GM12878 (cell line): ENCODE measurements at regions of chr5 and their contacts with region 1.

Region 1: GRCh38 chr5:110507972-110508371 is 218.5 kb downstream of the TMEM232 start:
- DNase-seq: no peak
- ATAC-seq: no peak
- H3K4me3 ChIP-seq: no peak overlapping the region
- H3K27ac ChIP-seq: no peak overlapping the region
- H3K4me1 ChIP-seq: no peaks in the 10 kb centered on the region
- H3K27me3 ChIP-seq: no peaks in the 10 kb centered on the region; a peak in 1 of 4 replicates
- CTCF ChIP-seq: no peak
- EP300 ChIP-seq: no peak
- POLR2A ChIP-seq: no peak
- RAD21 ChIP-seq: no peak

Region 2: DNA sequence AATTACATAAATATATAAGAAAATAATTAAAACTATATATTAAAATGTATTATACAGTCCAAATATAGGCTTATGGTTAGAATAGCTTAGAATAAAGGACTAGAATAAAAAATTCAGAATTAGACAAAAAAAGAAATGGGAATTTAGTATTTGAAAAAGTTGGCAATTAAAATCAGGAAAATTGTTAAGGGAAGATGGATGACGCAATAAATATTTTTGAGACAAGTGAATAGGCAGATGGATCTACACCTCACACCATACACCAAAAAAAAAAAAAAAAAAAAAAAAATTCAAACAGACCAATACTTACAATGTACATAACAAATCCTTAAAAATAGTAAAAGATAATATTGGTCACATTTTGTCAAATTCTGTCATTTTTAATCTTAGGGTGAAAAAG is 17.8 kb after region 1 on chr5:
- CTCF ChIA-PET with region 1: no interaction called
- POLR2A ChIA-PET with region 1: no interaction called
- RAD21 ChIA-PET with region 1: no interaction called
- SMC1A ChIA-PET with region 1: no interaction called
- in situ Hi-C with region 1: no loop called
- intact Hi-C with region 1: loop called (anchors 1 kb)
- DNase-seq: no peak
- ATAC-seq: no peak
- H3K4me3 ChIP-seq: no peak overlapping the region
- H3K27ac ChIP-seq: no peak overlapping the region
- H3K4me1 ChIP-seq: no peaks in the 10 kb centered on the region
- H3K27me3 ChIP-seq: no peaks in the 10 kb centered on the region
- CTCF ChIP-seq: no peak
- EP300 ChIP-seq: no peak
- POLR2A ChIP-seq: no peak
- RAD21 ChIP-seq: no peak

Region 3: GRCh38 chr5:110536120-110537115 is 28.4 kb after region 1 on chr5:
- CTCF ChIA-PET with region 1: no interaction called
- POLR2A ChIA-PET with region 1: no interaction called
- RAD21 ChIA-PET with region 1: no interaction called
- SMC1A ChIA-PET with region 1: no interaction called
- in situ Hi-C with region 1: no loop called
- intact Hi-C with region 1: no loop called
- DNase-seq: no peak
- ATAC-seq: no peak
- H3K4me3 ChIP-seq: no peak overlapping the region
- H3K27ac ChIP-seq: no peak overlapping the region
- H3K4me1 ChIP-seq: no peaks in the 10 kb centered on the region
- H3K27me3 ChIP-seq: no peaks in the 10 kb centered on the region
- CTCF ChIP-seq: no peak
- EP300 ChIP-seq: no peak
- POLR2A ChIP-seq: no peak
- RAD21 ChIP-seq: no peak